ENCODE measurements at regions of chr19 and their contacts with region 1.

Region 1: GRCh38 chr19:46904114-46905060 is 43.6 kb downstream of the ARHGAP35 start:
- DNase-seq: peak; percentile 38 to 82 (median 57)
- H3K4me3 ChIP-seq: no peak overlapping the region
- H3K27ac ChIP-seq: peak overlapping the region in 4 of 5 donors; percentile 67 to 86 (median 74)
- H3K4me1 ChIP-seq: peaks cover 42 to 62% of the 10 kb centered on the region in 2 donors
- H3K27me3 ChIP-seq: no peaks in the 10 kb centered on the region
- CTCF ChIP-seq: peak in 1 of 6 experiments; percentile 4
- POLR2A ChIP-seq: no peak

Region 2: DNA sequence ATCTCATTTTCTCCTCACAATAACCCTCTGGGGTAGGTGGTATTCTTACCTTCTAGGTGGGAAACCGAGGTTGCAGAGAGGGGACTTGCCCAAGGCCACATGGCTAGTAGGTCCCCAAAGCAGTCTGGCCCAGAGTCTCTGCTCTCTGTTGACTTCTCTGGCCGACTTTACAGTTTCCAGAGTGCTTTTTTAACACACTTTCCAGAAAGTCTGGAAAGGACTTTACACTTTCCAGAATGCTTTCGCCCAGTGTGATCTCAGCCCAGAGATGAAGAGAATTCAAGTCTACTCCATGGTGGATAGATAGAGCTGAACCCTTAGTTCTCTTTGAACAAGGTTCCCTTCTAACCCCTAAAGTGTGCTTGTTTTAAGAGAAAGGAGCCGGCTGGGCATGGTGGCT is 31.4 kb before region 1 on chr19:
- intact Hi-C with region 1: loop called in 1 of 2 experiments (anchors 5 kb)
- DNase-seq: no peak
- H3K4me3 ChIP-seq: no peak overlapping the region
- H3K27ac ChIP-seq: no peak overlapping the region
- H3K4me1 ChIP-seq: peaks cover 0 to 4% of the 10 kb centered on the region in 2 donors
- H3K27me3 ChIP-seq: no peaks in the 10 kb centered on the region
- CTCF ChIP-seq: no peak
- POLR2A ChIP-seq: no peak

Measured in adrenal gland (tissue), 19 donors.